Posterior vena cava (tissue), 2 donors: ENCODE measurements at regions of chr3 and their contacts with region 1.

Region 1: DNA sequence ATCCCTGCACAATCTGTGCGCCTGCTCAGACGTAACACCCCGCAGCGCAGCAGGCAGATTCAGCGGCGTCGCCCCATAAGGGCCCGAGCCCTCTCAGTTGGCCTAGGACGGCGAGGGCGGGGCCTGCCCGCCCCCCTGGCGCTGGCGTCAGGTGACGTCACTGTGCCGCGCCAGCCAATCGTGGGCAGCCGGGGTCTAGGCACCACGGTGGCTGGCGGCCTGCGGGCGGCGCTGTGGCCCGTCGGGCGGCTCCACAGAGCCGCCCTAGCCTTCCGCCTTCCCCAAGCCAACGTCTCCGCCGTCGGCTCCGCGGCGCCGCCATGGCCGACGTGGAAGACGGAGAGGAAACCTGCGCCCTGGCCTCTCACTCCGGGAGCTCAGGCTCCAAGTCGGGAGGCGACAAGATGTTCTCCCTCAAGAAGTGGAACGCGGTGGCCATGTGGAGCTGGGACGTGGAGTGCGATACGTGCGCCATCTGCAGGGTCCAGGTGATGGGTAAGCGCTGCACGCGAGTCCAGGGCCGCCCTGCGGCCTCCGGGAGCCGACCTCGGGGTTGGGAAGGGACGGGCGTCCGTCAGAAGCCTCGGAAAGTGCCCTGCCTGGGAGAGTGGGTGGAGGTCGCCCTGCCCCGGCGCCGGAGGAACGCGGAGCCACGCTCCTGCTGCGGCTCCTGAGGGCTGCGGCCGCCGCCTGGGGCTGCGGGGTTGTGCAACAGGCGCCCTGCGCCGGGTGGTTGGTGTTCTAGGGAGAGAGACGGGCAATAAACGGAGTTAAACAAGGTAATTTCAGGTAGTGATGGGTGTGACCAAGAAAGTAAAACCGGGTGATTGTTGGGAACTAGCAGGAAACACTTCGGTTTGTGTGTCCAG is at the start of gene RNF7:
- DNase-seq: peak; percentile 98
- total RNA-seq, gene RNF7: 62.4 to 73.6 TPM

Region 2: GRCh38 chr3:141605883-141606282 is 132.4 kb before region 1 on chr3:
- intact Hi-C with region 1: loop called in 1 of 2 experiments (anchors 5 kb)
- DNase-seq: no peak

Region 3: GRCh38 chr3:141875374-141875892 is 137.2 kb after region 1 on chr3:
- intact Hi-C with region 1: loop called in 1 of 2 experiments (anchors 5 kb)
- DNase-seq: peak; percentile 96